GM13977 (cell line): ENCODE measurements at regions of chr2 and their contacts with region 1.

Region 1: GRCh38 chr2:26469092-26469710 is 8.7 kb downstream of the OTOF start:
- DNase-seq: peak; percentile 85
- CTCF ChIP-seq: peak; percentile 77

Region 2: GRCh38 chr2:25951071-25951547 is 518.1 kb before region 1 on chr2:
- in situ Hi-C with region 1: loop called (anchors 25 kb)
- DNase-seq: peak; percentile 81
- CTCF ChIP-seq: peak; percentile 96